ENCODE measurements at regions of chr16 and their contacts with region 1.

Region 1: DNA sequence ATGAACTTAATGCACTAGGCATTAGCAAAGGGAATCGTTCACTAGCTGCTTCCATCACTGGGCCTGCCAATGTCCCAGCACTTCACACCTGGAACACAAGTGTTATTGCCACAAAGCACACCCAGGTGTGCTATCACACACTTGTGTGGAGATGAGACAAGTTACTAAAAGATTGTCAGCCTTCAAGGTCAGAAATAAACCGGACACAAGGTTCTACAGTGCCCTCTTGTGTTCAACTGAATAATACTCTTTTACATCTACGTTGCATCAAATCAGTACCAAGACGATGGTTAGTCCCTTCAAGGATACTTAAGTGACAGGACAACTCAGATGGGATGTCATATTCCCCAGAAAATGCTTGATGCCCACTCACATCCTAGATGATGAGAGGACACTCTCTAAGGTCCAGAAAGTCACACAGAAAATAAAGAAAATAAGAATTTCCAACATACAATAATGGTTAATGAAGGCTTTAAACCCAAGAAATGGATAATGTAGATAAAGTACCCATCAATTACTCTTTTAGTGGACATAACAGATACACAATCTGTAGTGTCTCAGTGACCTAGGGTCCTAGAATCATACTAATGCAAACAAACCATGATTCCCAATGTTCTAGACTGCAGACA is 16.4 kb upstream of the GLG1 start:
- DNase-seq: peak; percentile 58
- ATAC-seq: no peak
- H3K4me3 ChIP-seq: no peak overlapping the region
- H3K4me3 Mint-ChIP-seq: no peak overlapping the region
- H3K27ac ChIP-seq: no peak overlapping the region
- H3K27ac Mint-ChIP-seq: no peak overlapping the region
- H3K4me1 ChIP-seq: no peaks in the 10 kb centered on the region
- H3K4me1 Mint-ChIP-seq: no peaks in the 10 kb centered on the region
- H3K27me3 ChIP-seq: no peaks in the 10 kb centered on the region
- H3K27me3 Mint-ChIP-seq: no peaks in the 10 kb centered on the region
- CTCF ChIP-seq: peak; percentile 70

Region 2: GRCh38 chr16:74438492-74439041 is 184.8 kb before region 1 on chr16:
- CTCF ChIA-PET with region 1: no interaction called
- POLR2A ChIA-PET with region 1: no interaction called
- intact Hi-C with region 1: no loop called
- DNase-seq: no peak
- ATAC-seq: no peak
- H3K4me3 ChIP-seq: no peak overlapping the region
- H3K4me3 Mint-ChIP-seq: no peak overlapping the region
- H3K27ac ChIP-seq: no peak overlapping the region
- H3K27ac Mint-ChIP-seq: no peak overlapping the region
- H3K4me1 ChIP-seq: no peaks in the 10 kb centered on the region
- H3K4me1 Mint-ChIP-seq: no peaks in the 10 kb centered on the region
- H3K27me3 ChIP-seq: no peaks in the 10 kb centered on the region
- H3K27me3 Mint-ChIP-seq: no peaks in the 10 kb centered on the region
- CTCF ChIP-seq: no peak

Region 3: GRCh38 chr16:74501484-74502479 is 121.5 kb before region 1 on chr16:
- CTCF ChIA-PET with region 1: interaction called, 4 read pairs
- POLR2A ChIA-PET with region 1: no interaction called
- intact Hi-C with region 1: loop called (anchors 10 kb)
- DNase-seq: no peak
- ATAC-seq: no peak
- H3K4me3 ChIP-seq: no peak overlapping the region
- H3K4me3 Mint-ChIP-seq: no peak overlapping the region
- H3K27ac ChIP-seq: no peak overlapping the region
- H3K27ac Mint-ChIP-seq: no peak overlapping the region
- H3K4me1 ChIP-seq: no peaks in the 10 kb centered on the region
- H3K4me1 Mint-ChIP-seq: no peaks in the 10 kb centered on the region
- H3K27me3 ChIP-seq: no peaks in the 10 kb centered on the region
- H3K27me3 Mint-ChIP-seq: no peaks in the 10 kb centered on the region
- CTCF ChIP-seq: no peak

Region 4: DNA sequence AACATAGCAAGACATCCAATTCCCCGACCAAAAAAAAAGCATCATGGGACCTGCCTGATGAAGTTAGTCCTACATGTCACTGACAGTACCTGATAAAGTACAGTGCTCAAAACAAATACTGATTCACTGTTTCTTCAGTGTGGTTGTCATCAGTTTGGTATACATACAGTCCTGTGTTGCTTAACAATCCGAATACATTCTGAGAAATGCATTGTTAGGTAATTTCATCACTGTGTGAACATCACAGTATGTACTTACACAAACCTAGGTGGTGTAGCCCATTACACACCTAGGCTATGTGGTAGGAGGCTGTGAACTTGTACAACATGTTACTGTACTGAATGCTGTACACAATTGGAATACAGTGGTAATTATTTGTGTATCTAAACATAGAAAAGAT is 170.2 kb after region 1 on chr16:
- CTCF ChIA-PET with region 1: no interaction called
- POLR2A ChIA-PET with region 1: no interaction called
- intact Hi-C with region 1: no loop called
- DNase-seq: no peak
- ATAC-seq: no peak
- H3K4me3 ChIP-seq: no peak overlapping the region
- H3K4me3 Mint-ChIP-seq: no peak overlapping the region
- H3K27ac ChIP-seq: no peak overlapping the region
- H3K27ac Mint-ChIP-seq: no peak overlapping the region
- H3K4me1 ChIP-seq: no peaks in the 10 kb centered on the region
- H3K4me1 Mint-ChIP-seq: no peaks in the 10 kb centered on the region
- H3K27me3 ChIP-seq: peaks cover 0 to 23% (median 2%) of the 10 kb centered on the region in 4 experiments
- H3K27me3 Mint-ChIP-seq: peaks cover 35% of the 10 kb centered on the region
- CTCF ChIP-seq: no peak

Measured in B cell (primary cell).